ENCODE measurements at regions of chr5 and their contacts with region 1.

Region 1: DNA sequence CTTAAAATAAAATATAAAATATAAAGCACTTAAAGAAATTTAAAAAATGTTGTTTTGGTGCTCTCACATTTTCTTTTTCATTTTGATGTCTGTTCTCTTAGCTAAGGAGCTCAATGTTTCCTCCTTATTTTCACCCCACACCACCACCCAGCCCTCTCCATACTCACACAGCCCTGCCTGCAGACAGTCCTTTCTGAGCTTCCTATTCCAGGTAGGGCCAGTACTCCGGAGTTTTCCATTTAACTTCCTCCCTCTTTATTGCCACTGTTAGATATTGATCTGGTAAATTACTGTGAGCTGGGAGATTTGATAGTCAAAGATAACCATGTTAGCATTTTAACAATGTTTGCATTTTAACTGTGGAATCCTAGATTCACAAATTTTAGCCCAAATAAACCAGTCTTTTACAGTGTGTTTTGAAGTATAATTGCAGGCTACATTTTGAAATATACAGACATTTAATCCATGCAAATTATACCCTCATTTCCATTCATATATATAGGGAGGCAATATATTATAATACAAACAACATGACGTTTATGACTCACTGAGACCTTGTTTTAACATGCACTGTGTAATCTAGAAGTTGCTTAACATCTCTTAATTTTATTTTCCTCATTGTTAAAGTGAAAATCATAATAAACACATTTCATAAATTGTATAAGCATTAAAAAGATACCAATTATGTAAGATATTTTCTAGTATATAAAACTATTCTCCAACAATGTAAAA is 927.1 kb downstream of the NR2F1-AS1 start:
- DNase-seq: no peak
- ATAC-seq: no peak
- H3K4me3 ChIP-seq: no peak overlapping the region
- H3K4me3 Mint-ChIP-seq: no peak overlapping the region
- H3K27ac ChIP-seq: no peak overlapping the region
- H3K27ac Mint-ChIP-seq: no peak overlapping the region
- H3K4me1 ChIP-seq: no peaks in the 10 kb centered on the region
- H3K4me1 Mint-ChIP-seq: no peaks in the 10 kb centered on the region
- H3K27me3 ChIP-seq: no peaks in the 10 kb centered on the region
- H3K27me3 Mint-ChIP-seq: no peaks in the 10 kb centered on the region

Region 2: GRCh38 chr5:92758552-92758951 is 104.7 kb after region 1 on chr5:
- CTCF ChIA-PET with region 1: no interaction called
- POLR2A ChIA-PET with region 1: interaction called in 1 of 2 experiments, 12 read pairs
- DNase-seq: no peak
- ATAC-seq: no peak
- H3K4me3 ChIP-seq: no peak overlapping the region
- H3K4me3 Mint-ChIP-seq: no peak overlapping the region
- H3K27ac ChIP-seq: no peak overlapping the region
- H3K27ac Mint-ChIP-seq: no peak overlapping the region
- H3K4me1 ChIP-seq: no peaks in the 10 kb centered on the region
- H3K4me1 Mint-ChIP-seq: no peaks in the 10 kb centered on the region
- H3K27me3 ChIP-seq: no peaks in the 10 kb centered on the region
- H3K27me3 Mint-ChIP-seq: no peaks in the 10 kb centered on the region

Measured in T-cell (primary cell).